WTC11 (cell line): ENCODE measurements at regions of chr13 and their contacts with region 1.

Region 1: GRCh38 chr13:92017737-92018136 is 619.3 kb downstream of the GPC5 start:
- DNase-seq: no peak
- ATAC-seq: no peak
- H3K4me3 Mint-ChIP-seq: no peak overlapping the region
- H3K27ac Mint-ChIP-seq: no peak overlapping the region
- H3K4me1 Mint-ChIP-seq: no peaks in the 10 kb centered on the region
- H3K27me3 Mint-ChIP-seq: no peaks in the 10 kb centered on the region
- CTCF ChIP-seq: no peak

Region 2: DNA sequence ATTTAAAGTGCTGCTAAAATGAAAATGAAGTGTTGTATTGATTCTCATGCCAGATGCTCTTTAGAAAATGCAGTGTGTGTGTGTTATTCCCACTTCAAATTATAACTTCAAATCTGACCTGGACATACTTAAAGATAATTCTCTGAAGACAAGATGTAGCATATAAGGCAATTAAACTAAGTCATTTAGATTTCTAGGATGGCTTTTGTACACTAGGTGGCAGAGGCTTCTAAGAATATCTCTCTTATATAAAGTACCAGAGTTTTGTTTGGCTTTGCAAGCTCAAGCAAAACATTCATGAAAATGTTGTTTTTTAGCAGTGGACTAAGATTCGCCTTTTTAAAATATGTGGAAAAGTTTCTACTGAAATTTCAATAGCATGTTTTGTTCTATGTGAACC is 212.1 kb before region 1 on chr13:
- CTCF ChIA-PET with region 1: no interaction called
- POLR2A ChIA-PET with region 1: interaction called, 12 read pairs
- DNase-seq: no peak
- ATAC-seq: peak; percentile 38; the same call in 1 of the 2 replicates
- H3K4me3 Mint-ChIP-seq: no peak overlapping the region
- H3K27ac Mint-ChIP-seq: no peak overlapping the region
- H3K4me1 Mint-ChIP-seq: peaks cover 53% of the 10 kb centered on the region
- H3K27me3 Mint-ChIP-seq: no peaks in the 10 kb centered on the region
- CTCF ChIP-seq: no peak

Region 3: GRCh38 chr13:92103689-92104153 is 86.0 kb after region 1 on chr13:
- CTCF ChIA-PET with region 1: no interaction called
- POLR2A ChIA-PET with region 1: no interaction called
- DNase-seq: no peak
- ATAC-seq: peak; percentile 39; the same call in 1 of the 2 replicates
- H3K4me3 Mint-ChIP-seq: no peak overlapping the region
- H3K27ac Mint-ChIP-seq: no peak overlapping the region
- H3K4me1 Mint-ChIP-seq: peaks cover 7% of the 10 kb centered on the region
- H3K27me3 Mint-ChIP-seq: no peaks in the 10 kb centered on the region
- CTCF ChIP-seq: no peak